H1 (cell line): ENCODE measurements at regions of chr9 and their contacts with region 1.

Region 1: DNA sequence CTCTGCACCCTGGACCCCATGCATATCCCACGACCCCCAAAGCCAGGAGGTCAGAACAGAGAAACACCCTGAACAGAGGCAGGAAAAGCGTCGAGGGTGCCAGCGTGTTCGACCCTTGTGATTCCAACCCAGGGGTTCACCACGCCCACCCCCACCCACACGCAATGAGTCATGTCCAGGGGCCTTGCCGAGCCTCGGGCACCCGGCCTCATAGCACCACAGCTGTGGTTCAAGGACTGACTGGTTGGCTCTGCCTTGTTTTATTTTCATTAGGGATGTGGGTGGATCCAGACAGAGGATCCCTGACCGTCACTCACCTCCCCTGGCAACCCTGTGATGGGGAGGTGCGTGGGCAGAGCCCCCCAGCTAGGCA is 9.5 kb upstream of the QSOX2 start:
- DNase-seq: no peak
- H3K4me3 ChIP-seq: no peak overlapping the region
- H3K27ac ChIP-seq: no peak overlapping the region
- H3K4me1 ChIP-seq: peaks cover 0 to 4% (median under 1%) of the 10 kb centered on the region in 4 experiments; a peak in 2 of 7 replicates
- H3K27me3 ChIP-seq: no peaks in the 10 kb centered on the region
- CTCF ChIP-seq: no peak
- EP300 ChIP-seq: no peak
- POLR2A ChIP-seq: no peak
- RAD21 ChIP-seq: no peak

Region 2: DNA sequence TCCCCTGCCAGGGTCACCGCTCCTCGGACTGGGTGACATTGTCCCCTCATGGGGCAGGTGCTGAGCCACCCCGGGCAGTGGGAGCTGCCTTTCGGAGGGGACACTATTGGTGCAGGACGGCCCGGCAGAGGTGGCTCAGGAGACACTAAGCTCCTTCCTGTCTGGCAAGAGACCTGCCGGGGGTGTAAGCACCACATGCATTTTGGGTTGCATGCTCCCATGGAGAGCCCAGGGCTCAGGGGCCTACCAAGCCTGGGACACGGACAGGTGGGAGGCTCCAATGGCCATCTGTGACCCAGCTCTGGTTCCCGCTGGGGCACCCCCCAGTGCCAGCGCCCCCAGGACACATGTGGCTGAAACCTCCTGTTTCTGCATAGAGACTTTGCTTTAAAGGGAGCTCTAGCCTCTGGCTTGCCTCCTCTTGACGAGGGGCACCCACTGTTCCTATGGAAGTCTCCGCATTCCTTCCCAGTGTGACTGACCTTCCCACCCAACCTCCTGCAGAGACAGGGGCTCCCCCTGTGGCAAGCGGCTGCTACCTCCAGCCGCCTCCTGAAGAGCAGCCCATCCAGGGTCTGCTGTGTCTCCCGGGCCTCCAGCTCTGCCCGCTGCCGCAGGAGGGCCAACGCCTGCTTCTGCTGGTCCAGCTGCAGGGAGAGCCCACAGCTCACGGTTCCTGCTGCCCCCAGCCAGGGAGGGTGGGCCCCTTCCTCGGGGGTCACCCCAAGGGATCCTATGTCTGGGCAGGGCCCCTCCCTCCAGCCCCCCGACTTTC is 20.7 kb after region 1 on chr9:
- CTCF ChIA-PET with region 1: interaction called, 10 read pairs
- POLR2A ChIA-PET with region 1: no interaction called
- DNase-seq: no peak
- H3K4me3 ChIP-seq: no peak overlapping the region
- H3K27ac ChIP-seq: no peak overlapping the region
- H3K4me1 ChIP-seq: no peaks in the 10 kb centered on the region; a peak in 1 of 7 replicates
- H3K27me3 ChIP-seq: no peaks in the 10 kb centered on the region
- CTCF ChIP-seq: no peak
- EP300 ChIP-seq: no peak
- POLR2A ChIP-seq: no peak
- RAD21 ChIP-seq: no peak

Region 3: DNA sequence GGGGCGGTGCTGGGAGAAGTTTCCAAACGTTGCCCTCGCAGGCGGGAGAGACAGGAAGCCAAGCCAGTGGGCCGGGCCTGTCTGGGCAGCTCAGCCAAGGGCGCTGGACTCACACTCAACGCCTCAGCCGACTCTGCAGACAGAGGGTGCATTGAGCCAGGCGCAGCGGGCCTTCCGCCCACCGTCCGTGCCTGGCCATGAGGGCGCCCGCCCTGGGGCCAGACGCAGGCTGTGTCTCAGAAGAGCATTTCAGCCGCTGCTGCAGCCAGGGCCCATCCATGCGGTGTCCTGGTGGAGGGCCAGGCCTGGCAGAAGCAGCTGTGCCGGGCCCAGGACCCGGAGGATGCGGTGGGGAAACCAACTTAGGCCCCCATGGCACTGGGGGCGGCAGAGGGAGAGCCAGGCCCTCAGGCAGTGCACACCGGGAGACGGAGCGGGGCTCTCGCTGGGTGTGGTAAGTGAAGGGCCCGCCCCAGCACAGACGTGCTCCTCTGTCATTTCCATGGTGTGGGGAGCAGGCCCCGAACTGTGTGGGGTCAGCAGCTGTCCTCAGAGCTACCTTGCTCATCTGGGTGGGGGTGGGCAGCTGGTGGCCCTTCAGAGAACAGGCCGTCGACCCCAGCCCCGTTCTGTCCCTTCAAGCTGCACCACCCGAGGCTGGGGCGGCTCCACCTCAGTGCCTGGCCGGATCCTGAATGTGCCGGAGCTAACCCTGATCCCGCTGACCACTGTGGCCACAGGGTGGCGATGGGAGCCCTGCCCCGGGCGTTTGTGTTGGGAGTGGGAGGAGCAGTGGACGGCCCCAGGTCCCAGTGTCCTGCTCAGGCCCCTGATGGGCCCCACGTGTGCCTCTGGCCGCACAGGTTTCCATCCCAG is 90.4 kb after region 1 on chr9:
- CTCF ChIA-PET with region 1: no interaction called
- POLR2A ChIA-PET with region 1: no interaction called
- DNase-seq: peak in 1 of 2 experiments; percentile 82
- H3K4me3 ChIP-seq: no peak overlapping the region
- H3K27ac ChIP-seq: peak overlapping the region; percentile 7; the same call in 1 of the 2 replicates
- H3K4me1 ChIP-seq: peaks cover 0 to 19% (median 10%) of the 10 kb centered on the region in 4 experiments; a peak in 6 of 7 replicates
- H3K27me3 ChIP-seq: no peaks in the 10 kb centered on the region
- CTCF ChIP-seq: peak in 2 of 3 experiments; percentile 58; a peak in 3 of 4 replicates
- EP300 ChIP-seq: no peak
- POLR2A ChIP-seq: no peak
- RAD21 ChIP-seq: peak; percentile 42 to 58